MCF 10A (cell line): ENCODE measurements at regions of chr5 and their contacts with region 1.

Region 1: GRCh38 chr5:67257500-67257899 is 60.9 kb upstream of the CD180 start:
- DNase-seq: peak; percentile 95
- H3K4me3 Mint-ChIP-seq: peak overlapping the region; percentile 22
- H3K27ac Mint-ChIP-seq: peak overlapping the region; percentile 98
- H3K4me1 Mint-ChIP-seq: peaks cover 44% of the 10 kb centered on the region
- H3K27me3 Mint-ChIP-seq: no peaks in the 10 kb centered on the region
- CTCF ChIP-seq: no peak

Region 2: GRCh38 chr5:67268231-67269021 is 10.9 kb after region 1 on chr5:
- CTCF ChIA-PET with region 1: interaction called, 3 read pairs
- POLR2A ChIA-PET with region 1: interaction called, 63 read pairs
- intact Hi-C with region 1: no loop called
- DNase-seq: peak; percentile 97
- H3K4me3 Mint-ChIP-seq: no peak overlapping the region
- H3K27ac Mint-ChIP-seq: no peak overlapping the region
- H3K4me1 Mint-ChIP-seq: peaks cover 18% of the 10 kb centered on the region
- H3K27me3 Mint-ChIP-seq: no peaks in the 10 kb centered on the region
- CTCF ChIP-seq: no peak